A673 (cell line): ENCODE measurements at regions of chr11 and their contacts with region 1.

Region 1: GRCh38 chr11:80727315-80728230 is 1286.7 kb upstream of the TENM4 start:
- DNase-seq: peak; percentile 66
- H3K4me3 ChIP-seq: no peak overlapping the region
- H3K27ac ChIP-seq: no peak overlapping the region
- H3K4me1 ChIP-seq: peaks cover 8% of the 10 kb centered on the region
- H3K27me3 ChIP-seq: no peaks in the 10 kb centered on the region
- CTCF ChIP-seq: peak; percentile 68

Region 2: GRCh38 chr11:79438631-79439409 is 1288.8 kb before region 1 on chr11:
- CTCF ChIA-PET with region 1: no interaction called
- POLR2A ChIA-PET with region 1: interaction called, 26 read pairs
- intact Hi-C with region 1: no loop called
- DNase-seq: no peak
- H3K4me3 ChIP-seq: no peak overlapping the region
- H3K27ac ChIP-seq: no peak overlapping the region
- H3K4me1 ChIP-seq: peaks cover 34% of the 10 kb centered on the region
- H3K27me3 ChIP-seq: peaks cover 100% of the 10 kb centered on the region
- CTCF ChIP-seq: no peak

Region 3: DNA sequence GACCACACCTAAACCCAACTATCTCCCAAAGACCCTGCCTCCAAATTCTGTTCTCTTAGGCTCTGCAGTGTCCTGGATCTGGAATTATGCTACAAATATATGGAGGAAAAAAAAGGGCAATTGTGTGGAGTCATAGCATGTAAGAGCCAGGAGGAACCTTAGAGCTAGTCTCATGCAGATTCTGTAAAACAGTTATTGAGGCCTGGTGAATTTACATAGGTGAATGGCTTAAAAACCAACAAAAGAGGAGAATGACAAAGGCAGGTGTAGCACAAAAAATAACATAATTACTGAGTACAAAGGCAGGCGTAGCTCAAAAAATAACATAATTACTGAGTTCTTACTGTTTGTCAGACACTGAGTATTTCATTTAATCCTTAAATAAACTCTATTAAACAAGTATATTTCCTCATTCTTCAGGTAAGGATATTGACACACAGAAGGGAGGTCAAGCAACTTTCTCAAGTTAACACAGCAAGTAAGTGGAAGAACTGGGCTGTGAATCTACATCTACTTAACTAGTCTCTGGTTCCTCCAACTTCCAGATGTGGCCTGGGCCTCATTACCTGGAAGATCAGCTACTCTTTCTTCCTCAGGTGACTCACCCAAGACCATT is 347.8 kb before region 1 on chr11:
- CTCF ChIA-PET with region 1: no interaction called
- POLR2A ChIA-PET with region 1: interaction called, 12 read pairs
- intact Hi-C with region 1: no loop called
- DNase-seq: no peak
- H3K4me3 ChIP-seq: no peak overlapping the region
- H3K27ac ChIP-seq: no peak overlapping the region
- H3K4me1 ChIP-seq: no peaks in the 10 kb centered on the region
- H3K27me3 ChIP-seq: no peaks in the 10 kb centered on the region
- CTCF ChIP-seq: no peak

Region 4: DNA sequence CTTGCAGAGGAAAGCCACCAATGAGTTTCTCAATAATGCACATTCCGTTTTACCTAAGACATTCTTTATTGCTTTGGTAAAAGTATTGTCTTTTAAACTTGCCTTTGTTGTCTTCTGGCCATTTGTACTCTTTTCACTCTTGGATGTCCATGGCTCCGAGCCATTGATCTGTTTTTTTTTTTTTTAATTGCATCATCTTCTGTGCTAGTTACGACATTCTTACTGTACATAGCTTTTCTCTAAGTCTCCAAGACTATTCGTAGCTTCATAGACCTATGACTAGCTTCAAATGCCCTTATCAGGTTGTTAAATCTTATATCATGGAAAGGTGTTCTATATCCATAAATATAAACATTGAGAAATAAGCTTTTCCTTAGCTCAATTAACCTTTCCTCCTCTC is 483.5 kb after region 1 on chr11:
- CTCF ChIA-PET with region 1: no interaction called
- POLR2A ChIA-PET with region 1: no interaction called
- intact Hi-C with region 1: no loop called
- DNase-seq: no peak
- H3K4me3 ChIP-seq: no peak overlapping the region
- H3K27ac ChIP-seq: no peak overlapping the region
- H3K4me1 ChIP-seq: no peaks in the 10 kb centered on the region
- H3K27me3 ChIP-seq: no peaks in the 10 kb centered on the region
- CTCF ChIP-seq: no peak